ENCODE measurements at regions of chr1 and their contacts with region 1.

Region 1: GRCh38 chr1:156456622-156457465 is 43.7 kb downstream of the MEF2D start:
- DNase-seq: peak; percentile 88
- ATAC-seq: peak; percentile 84
- H3K4me3 Mint-ChIP-seq: peak overlapping the region; percentile 91
- H3K27ac Mint-ChIP-seq: peak overlapping the region; percentile 97
- H3K4me1 Mint-ChIP-seq: peaks cover 19% of the 10 kb centered on the region
- H3K27me3 Mint-ChIP-seq: no peaks in the 10 kb centered on the region
- CTCF ChIP-seq: no peak

Region 2: GRCh38 chr1:156247460-156248322 is 209.2 kb before region 1 on chr1 and contains the start of gene PAQR6:
- CTCF ChIA-PET with region 1: no interaction called
- POLR2A ChIA-PET with region 1: no interaction called
- intact Hi-C with region 1: no loop called
- DNase-seq: no peak
- ATAC-seq: no peak
- H3K4me3 Mint-ChIP-seq: no peak within 1 kb of the TSS
- H3K27ac Mint-ChIP-seq: no peak within 1 kb of the TSS
- H3K4me1 Mint-ChIP-seq: peaks cover 17% of the 10 kb centered on the region
- H3K27me3 Mint-ChIP-seq: no peaks in the 10 kb centered on the region
- CTCF ChIP-seq: no peak
- total RNA-seq, gene PAQR6: 1.6 and 1.8 TPM in 2 replicates

Region 3: GRCh38 chr1:156445789-156446263 is 11.0 kb before region 1 on chr1:
- CTCF ChIA-PET with region 1: interaction called, 11 read pairs
- POLR2A ChIA-PET with region 1: interaction called, 14 read pairs
- intact Hi-C with region 1: no loop called
- DNase-seq: peak; percentile 72
- ATAC-seq: peak; percentile 90
- H3K4me3 Mint-ChIP-seq: no peak overlapping the region
- H3K27ac Mint-ChIP-seq: no peak overlapping the region
- H3K4me1 Mint-ChIP-seq: peaks cover 6% of the 10 kb centered on the region
- H3K27me3 Mint-ChIP-seq: peaks cover 58% of the 10 kb centered on the region
- CTCF ChIP-seq: peak; percentile 98

Region 4: DNA sequence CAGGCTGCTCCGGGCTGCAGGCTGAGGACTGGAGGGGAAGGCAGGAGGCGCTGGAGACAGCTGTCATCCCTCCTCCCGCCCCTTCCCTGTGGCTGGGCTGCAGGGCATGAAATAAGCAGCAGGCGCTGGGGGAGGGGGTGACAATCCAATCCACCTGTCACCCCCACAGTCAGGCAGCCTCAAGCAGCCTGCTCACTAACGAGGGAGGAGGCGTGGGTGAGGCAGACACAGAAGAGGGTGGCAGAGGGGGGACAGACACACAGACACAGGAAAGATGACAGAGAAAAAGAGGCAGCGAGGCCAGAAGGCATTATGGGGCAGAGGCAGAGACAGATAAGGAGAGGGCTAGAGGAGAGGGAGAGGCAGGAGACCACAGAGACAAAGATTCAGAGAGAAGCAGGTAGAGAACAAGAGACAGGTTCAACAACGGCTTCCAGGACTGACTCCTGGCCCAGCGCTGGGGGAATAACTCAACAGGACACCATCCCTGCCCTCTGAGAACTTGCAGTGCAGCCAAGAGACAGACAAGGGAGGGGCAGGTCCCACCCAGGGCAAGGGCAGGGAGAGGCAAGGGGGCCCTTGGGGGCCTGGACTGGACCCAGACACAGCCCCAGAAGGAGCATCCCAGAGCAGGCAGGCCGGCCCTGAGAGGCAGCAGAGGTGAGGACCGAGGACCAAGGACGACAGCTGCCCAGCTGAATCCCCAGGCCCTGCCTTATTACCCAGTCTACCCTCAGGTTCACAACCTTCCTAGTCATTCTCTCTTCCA is 32.5 kb after region 1 on chr1:
- CTCF ChIA-PET with region 1: interaction called, 3 read pairs
- POLR2A ChIA-PET with region 1: interaction called, 45 read pairs
- intact Hi-C with region 1: loop called (anchors 1 kb)
- DNase-seq: no peak
- ATAC-seq: no peak
- H3K4me3 Mint-ChIP-seq: peak overlapping the region; percentile 88
- H3K27ac Mint-ChIP-seq: peak overlapping the region; percentile 97
- H3K4me1 Mint-ChIP-seq: peaks cover 96% of the 10 kb centered on the region
- H3K27me3 Mint-ChIP-seq: no peaks in the 10 kb centered on the region
- CTCF ChIP-seq: no peak

Region 5: DNA sequence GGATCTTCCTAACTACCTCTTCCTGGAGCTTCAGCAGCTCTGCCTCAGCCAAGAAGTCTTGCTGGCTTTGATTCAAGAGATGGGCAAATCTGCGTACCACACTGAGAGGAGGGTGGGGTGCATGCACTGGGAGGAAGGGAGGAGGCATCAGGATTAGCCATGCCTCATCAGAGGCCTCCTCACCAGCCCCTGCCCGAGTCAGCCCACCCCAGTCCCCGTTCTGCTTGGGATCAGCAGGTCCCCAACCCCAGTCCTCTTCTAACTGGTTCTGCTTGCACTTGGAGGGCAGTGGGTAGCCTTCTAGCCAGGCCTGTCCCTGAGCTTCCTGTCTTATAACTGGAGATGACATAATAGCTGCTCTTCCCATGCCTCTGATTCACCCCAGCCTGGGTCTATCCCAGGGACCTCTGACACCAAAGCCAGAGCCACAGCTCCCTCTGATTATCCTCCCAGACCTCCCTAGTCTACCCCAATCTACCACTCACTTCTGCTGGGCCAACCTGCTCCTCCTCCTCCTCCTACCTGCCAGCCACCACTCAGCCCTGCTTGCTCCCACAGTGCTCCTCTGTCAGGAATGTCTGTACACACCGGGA is 84.0 kb after region 1 on chr1:
- CTCF ChIA-PET with region 1: no interaction called
- POLR2A ChIA-PET with region 1: no interaction called
- intact Hi-C with region 1: no loop called
- DNase-seq: no peak
- ATAC-seq: no peak
- H3K4me3 Mint-ChIP-seq: no peak overlapping the region
- H3K27ac Mint-ChIP-seq: no peak overlapping the region
- H3K4me1 Mint-ChIP-seq: no peaks in the 10 kb centered on the region
- H3K27me3 Mint-ChIP-seq: no peaks in the 10 kb centered on the region
- CTCF ChIP-seq: no peak

Region 6: DNA sequence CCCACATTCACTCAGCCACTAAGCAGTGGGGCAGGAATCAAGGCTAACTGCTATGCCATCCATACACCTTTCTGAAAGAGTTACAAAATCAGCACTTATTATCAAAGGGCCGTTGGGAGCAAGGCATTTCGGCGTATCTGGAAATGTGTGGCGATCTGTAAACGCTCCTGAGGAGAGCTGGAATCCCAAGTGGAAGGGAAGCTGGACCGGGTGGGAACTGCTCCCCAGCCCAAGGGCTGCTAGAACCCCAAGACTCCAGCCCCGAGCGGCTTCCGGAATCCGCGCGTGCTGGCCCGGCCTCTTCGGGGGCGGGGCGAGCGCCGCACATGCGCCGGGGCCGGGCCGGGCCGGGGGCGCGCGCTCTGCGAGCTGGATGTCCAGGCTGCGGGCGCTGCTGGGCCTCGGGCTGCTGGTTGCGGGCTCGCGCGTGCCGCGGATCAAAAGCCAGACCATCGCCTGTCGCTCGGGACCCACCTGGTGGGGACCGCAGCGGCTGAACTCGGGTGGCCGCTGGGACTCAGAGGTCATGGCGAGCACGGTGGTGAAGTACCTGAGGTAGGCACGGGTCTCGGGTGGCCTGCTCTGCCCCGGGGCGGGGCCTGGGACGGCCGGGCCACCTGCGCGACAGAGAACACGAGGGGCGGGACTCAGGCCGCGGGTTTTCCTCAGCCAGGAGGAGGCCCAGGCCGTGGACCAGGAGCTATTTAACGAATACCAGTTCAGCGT is 134.8 kb after region 1 on chr1 and contains the start of gene NAXE:
- CTCF ChIA-PET with region 1: interaction called, 3 read pairs
- POLR2A ChIA-PET with region 1: interaction called, 16 read pairs
- intact Hi-C with region 1: no loop called
- DNase-seq: peak; percentile 78
- ATAC-seq: peak; percentile 94
- H3K4me3 Mint-ChIP-seq: peak within 1 kb of the TSS; percentile 90
- H3K27ac Mint-ChIP-seq: peak within 1 kb of the TSS; percentile 94
- H3K4me1 Mint-ChIP-seq: peaks cover 21% of the 10 kb centered on the region
- H3K27me3 Mint-ChIP-seq: no peaks in the 10 kb centered on the region
- CTCF ChIP-seq: no peak
- total RNA-seq, gene NAXE: 75.6 and 84.5 TPM in 2 replicates

Region 7: GRCh38 chr1:156608036-156608674 is 151.3 kb after region 1 on chr1:
- CTCF ChIA-PET with region 1: interaction called, 12 read pairs
- POLR2A ChIA-PET with region 1: interaction called, 5 read pairs
- intact Hi-C with region 1: loop called (anchors 1 kb)
- DNase-seq: no peak
- ATAC-seq: peak; percentile 78
- H3K4me3 Mint-ChIP-seq: peak overlapping the region; percentile 55
- H3K27ac Mint-ChIP-seq: peak overlapping the region; percentile 73
- H3K4me1 Mint-ChIP-seq: peaks cover 27% of the 10 kb centered on the region
- H3K27me3 Mint-ChIP-seq: peaks cover 5% of the 10 kb centered on the region
- CTCF ChIP-seq: peak; percentile 45

Region 8: GRCh38 chr1:156618853-156619581 is 162.2 kb after region 1 on chr1 and contains the start of gene HAPLN2:
- CTCF ChIA-PET with region 1: no interaction called
- POLR2A ChIA-PET with region 1: no interaction called
- intact Hi-C with region 1: no loop called
- DNase-seq: no peak
- ATAC-seq: peak; percentile 28
- H3K4me3 Mint-ChIP-seq: no peak within 1 kb of the TSS
- H3K27ac Mint-ChIP-seq: no peak within 1 kb of the TSS
- H3K4me1 Mint-ChIP-seq: no peaks in the 10 kb centered on the region
- H3K27me3 Mint-ChIP-seq: peaks cover 51% of the 10 kb centered on the region
- CTCF ChIP-seq: no peak
- total RNA-seq, gene HAPLN2: not detected in 2 replicates

Region 9: GRCh38 chr1:156751758-156752757 is 295.2 kb after region 1 on chr1:
- CTCF ChIA-PET with region 1: no interaction called
- POLR2A ChIA-PET with region 1: no interaction called
- intact Hi-C with region 1: loop called (anchors 5 kb)
- DNase-seq: peak; percentile 89
- ATAC-seq: peak; percentile 85
- H3K4me3 Mint-ChIP-seq: peak overlapping the region; percentile 93
- H3K27ac Mint-ChIP-seq: peak overlapping the region; percentile 92
- H3K4me1 Mint-ChIP-seq: peaks cover 62% of the 10 kb centered on the region
- H3K27me3 Mint-ChIP-seq: no peaks in the 10 kb centered on the region
- CTCF ChIP-seq: no peak